CD4-positive, alpha-beta T cell (primary cell): ENCODE measurements at regions of chr10 and their contacts with region 1.

Region 1: GRCh38 chr10:37680716-37681616 is 176.4 kb downstream of the ZNF248 start:
- DNase-seq: no peak
- ATAC-seq: no peak
- H3K4me3 ChIP-seq: no peak overlapping the region
- H3K4me3 Mint-ChIP-seq: no peak overlapping the region
- H3K27ac ChIP-seq: no peak overlapping the region
- H3K27ac Mint-ChIP-seq: no peak overlapping the region
- H3K4me1 ChIP-seq: no peaks in the 10 kb centered on the region
- H3K4me1 Mint-ChIP-seq: no peaks in the 10 kb centered on the region
- H3K27me3 ChIP-seq: no peaks in the 10 kb centered on the region
- H3K27me3 Mint-ChIP-seq: no peaks in the 10 kb centered on the region
- CTCF ChIP-seq: no peak

Region 2: DNA sequence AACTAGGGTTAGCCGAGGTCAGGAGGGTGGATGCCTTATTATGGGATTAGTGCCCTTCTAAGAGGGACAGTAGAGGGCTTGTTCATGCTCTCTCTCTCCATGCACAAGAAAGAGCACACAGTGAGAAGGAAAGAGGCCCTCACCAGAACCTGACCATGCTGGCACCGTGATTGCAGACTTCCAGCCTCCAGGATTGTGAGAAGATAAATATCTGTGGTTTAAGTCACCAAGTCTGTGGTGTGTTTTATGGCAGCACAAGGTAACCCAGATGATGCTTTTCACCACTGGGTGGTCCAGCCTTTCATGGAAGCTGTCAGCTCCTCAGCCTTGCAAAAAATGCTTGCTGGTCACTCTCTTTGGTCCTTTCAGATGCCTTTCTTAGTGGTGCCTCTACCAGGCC is 379.7 kb before region 1 on chr10:
- CTCF ChIA-PET with region 1: no interaction called
- POLR2A ChIA-PET with region 1: no interaction called
- intact Hi-C with region 1: no loop called
- DNase-seq: no peak
- ATAC-seq: no peak
- H3K4me3 ChIP-seq: no peak overlapping the region
- H3K4me3 Mint-ChIP-seq: no peak overlapping the region
- H3K27ac ChIP-seq: no peak overlapping the region
- H3K27ac Mint-ChIP-seq: no peak overlapping the region
- H3K4me1 ChIP-seq: no peaks in the 10 kb centered on the region
- H3K4me1 Mint-ChIP-seq: no peaks in the 10 kb centered on the region
- H3K27me3 ChIP-seq: no peaks in the 10 kb centered on the region
- H3K27me3 Mint-ChIP-seq: no peaks in the 10 kb centered on the region
- CTCF ChIP-seq: no peak

Region 3: GRCh38 chr10:37667736-37668135 is 13.2 kb before region 1 on chr10:
- CTCF ChIA-PET with region 1: no interaction called
- POLR2A ChIA-PET with region 1: no interaction called
- intact Hi-C with region 1: no loop called
- DNase-seq: no peak
- ATAC-seq: no peak
- H3K4me3 ChIP-seq: no peak overlapping the region
- H3K4me3 Mint-ChIP-seq: no peak overlapping the region
- H3K27ac ChIP-seq: no peak overlapping the region
- H3K27ac Mint-ChIP-seq: no peak overlapping the region
- H3K4me1 ChIP-seq: no peaks in the 10 kb centered on the region
- H3K4me1 Mint-ChIP-seq: no peaks in the 10 kb centered on the region
- H3K27me3 ChIP-seq: no peaks in the 10 kb centered on the region
- H3K27me3 Mint-ChIP-seq: no peaks in the 10 kb centered on the region
- CTCF ChIP-seq: no peak

Region 4: DNA sequence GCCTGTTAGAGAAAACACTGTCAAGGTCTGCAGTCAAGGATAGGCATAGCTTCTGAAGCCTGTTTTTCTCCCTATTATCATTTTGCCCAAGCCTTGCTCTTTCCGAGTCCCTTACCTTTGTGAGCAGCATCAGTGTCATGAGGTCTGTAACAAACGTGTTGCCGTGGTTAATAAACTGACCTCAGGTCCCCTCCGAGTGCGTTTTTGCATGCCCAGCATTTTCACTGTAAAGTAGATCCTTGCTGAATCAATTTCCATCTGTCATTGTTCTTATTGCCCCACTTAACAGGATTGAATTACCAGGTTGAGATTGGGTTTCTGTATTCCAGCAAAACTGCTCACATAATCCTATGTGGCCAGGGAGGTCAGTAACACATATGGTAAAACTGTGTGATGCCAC is 66.1 kb after region 1 on chr10:
- CTCF ChIA-PET with region 1: no interaction called
- POLR2A ChIA-PET with region 1: no interaction called
- intact Hi-C with region 1: loop called in 1 of 2 experiments (anchors 10 kb)
- DNase-seq: no peak
- ATAC-seq: no peak
- H3K4me3 ChIP-seq: no peak overlapping the region
- H3K4me3 Mint-ChIP-seq: no peak overlapping the region
- H3K27ac ChIP-seq: no peak overlapping the region
- H3K27ac Mint-ChIP-seq: no peak overlapping the region
- H3K4me1 ChIP-seq: no peaks in the 10 kb centered on the region
- H3K4me1 Mint-ChIP-seq: no peaks in the 10 kb centered on the region
- H3K27me3 ChIP-seq: no peaks in the 10 kb centered on the region
- H3K27me3 Mint-ChIP-seq: no peaks in the 10 kb centered on the region
- CTCF ChIP-seq: no peak